ENCODE measurements at regions of chr13 and their contacts with region 1.

Region 1: GRCh38 chr13:57629821-57630235 is 1.7 kb upstream of the PCDH17 start:
- DNase-seq: no peak
- ATAC-seq: no peak
- H3K4me3 ChIP-seq: no peak overlapping the region
- H3K27ac ChIP-seq: no peak overlapping the region
- H3K4me1 ChIP-seq: no peaks in the 10 kb centered on the region
- H3K27me3 ChIP-seq: peaks cover 0 to 13% of the 10 kb centered on the region in 2 experiments; a peak in 3 of 5 replicates
- CTCF ChIP-seq: no peak
- EP300 ChIP-seq: no peak
- POLR2A ChIP-seq: no peak
- RAD21 ChIP-seq: no peak

Region 2: DNA sequence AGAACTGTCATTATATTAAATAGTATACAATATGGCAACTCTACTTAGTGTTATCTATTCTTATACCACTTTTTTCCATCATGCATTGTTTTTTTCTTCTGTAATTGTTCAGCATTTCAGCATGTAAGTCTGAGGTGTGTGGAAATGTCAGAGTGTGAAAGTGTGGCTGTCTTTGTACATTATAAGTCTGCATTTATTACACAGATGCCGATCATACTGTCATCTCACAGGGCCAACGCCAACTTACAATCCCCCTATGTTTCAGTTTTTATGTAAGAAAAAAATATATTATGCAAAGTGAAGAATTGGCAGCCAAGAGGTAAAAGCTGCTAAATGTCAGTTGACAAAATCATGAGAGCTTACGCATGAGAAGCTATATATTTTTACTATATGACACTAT is 41.2 kb before region 1 on chr13:
- CTCF ChIA-PET with region 1: no interaction called
- POLR2A ChIA-PET with region 1: no interaction called
- in situ Hi-C with region 1: no loop called
- intact Hi-C with region 1: no loop called
- DNase-seq: no peak
- ATAC-seq: no peak
- H3K4me3 ChIP-seq: 0 out of 6 replicates have a peak overlapping the region, but pooled peaks of 1 of the 3 experiments have one; percentile 4
- H3K27ac ChIP-seq: no peak overlapping the region
- H3K4me1 ChIP-seq: no peaks in the 10 kb centered on the region
- H3K27me3 ChIP-seq: no peaks in the 10 kb centered on the region
- CTCF ChIP-seq: no peak
- EP300 ChIP-seq: no peak
- POLR2A ChIP-seq: no peak
- RAD21 ChIP-seq: no peak

Region 3: DNA sequence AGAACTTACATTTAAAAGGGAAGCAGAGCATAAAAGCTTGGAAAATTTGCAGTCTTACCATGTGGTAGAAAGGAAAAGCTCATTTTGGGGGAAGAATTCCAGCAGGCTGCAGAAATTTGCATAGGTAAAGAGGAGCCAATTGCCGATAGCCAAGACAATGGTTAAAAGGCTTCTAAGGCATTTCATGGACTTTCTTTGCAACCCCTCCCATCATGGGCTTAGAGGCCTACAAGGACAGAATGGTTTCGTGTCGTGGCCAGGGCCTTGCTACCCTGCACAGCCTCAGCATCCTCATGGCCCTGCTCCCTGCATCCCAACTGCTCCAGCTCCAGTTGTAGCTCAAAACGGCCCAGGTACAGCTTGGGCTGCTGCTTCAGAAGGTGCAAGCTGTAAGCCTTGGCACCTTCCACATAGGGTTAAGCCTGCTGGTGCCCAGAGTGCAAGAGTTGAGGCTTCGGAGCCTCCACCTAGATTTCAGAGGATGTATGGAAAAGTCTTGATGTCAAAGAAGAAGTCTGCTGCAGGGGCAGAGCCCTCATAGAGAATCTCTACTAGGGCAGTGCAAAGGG is 422.1 kb after region 1 on chr13:
- CTCF ChIA-PET with region 1: no interaction called
- POLR2A ChIA-PET with region 1: no interaction called
- in situ Hi-C with region 1: no loop called
- intact Hi-C with region 1: no loop called
- DNase-seq: no peak
- ATAC-seq: no peak
- H3K4me3 ChIP-seq: no peak overlapping the region
- H3K27ac ChIP-seq: no peak overlapping the region
- H3K4me1 ChIP-seq: no peaks in the 10 kb centered on the region
- H3K27me3 ChIP-seq: no peaks in the 10 kb centered on the region
- CTCF ChIP-seq: no peak
- EP300 ChIP-seq: no peak
- POLR2A ChIP-seq: no peak
- RAD21 ChIP-seq: no peak

Region 4: DNA sequence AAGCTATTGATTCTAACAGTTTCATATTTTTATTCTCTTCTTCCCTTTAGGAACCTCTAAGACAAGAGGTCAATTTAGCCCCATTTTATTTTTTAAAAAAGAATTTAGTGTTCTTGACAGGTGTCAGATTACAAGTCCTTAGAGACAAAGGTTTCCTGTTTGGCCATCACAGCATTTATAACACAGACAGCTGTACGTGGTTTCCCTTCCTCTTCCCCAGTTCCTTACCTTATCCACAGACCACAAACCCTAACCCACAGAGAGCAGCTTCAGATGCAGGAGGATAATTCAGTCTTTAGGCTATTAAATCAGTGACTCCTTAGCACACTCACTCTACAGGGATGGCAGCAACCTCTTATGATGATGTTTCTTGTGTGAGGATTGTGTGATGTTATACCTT is 1323.8 kb after region 1 on chr13:
- CTCF ChIA-PET with region 1: no interaction called
- POLR2A ChIA-PET with region 1: no interaction called
- in situ Hi-C with region 1: loop called (anchors 10 kb)
- intact Hi-C with region 1: no loop called
- DNase-seq: no peak
- ATAC-seq: no peak
- H3K4me3 ChIP-seq: no peak overlapping the region
- H3K27ac ChIP-seq: no peak overlapping the region
- H3K4me1 ChIP-seq: no peaks in the 10 kb centered on the region
- H3K27me3 ChIP-seq: no peaks in the 10 kb centered on the region
- CTCF ChIP-seq: no peak
- EP300 ChIP-seq: no peak
- POLR2A ChIP-seq: no peak
- RAD21 ChIP-seq: no peak

Region 5: DNA sequence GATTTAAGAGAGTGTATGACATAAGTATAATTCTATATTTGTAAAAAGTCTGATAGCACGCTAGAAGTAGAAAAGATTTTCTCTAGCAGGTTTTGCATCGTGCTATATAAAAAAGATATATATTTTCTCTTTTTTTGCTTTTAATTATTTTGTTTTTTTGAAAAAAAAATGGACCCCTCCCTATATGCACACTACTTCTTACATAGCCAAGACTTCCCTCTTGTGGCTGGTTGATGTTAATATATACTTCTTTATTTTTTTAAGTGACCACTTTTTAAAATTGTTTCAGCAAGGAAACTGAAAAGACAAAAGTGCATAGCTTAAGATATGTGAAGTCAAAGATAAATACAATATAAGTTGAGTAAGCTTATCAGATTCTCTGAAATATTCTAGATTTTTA is 1331.1 kb after region 1 on chr13:
- CTCF ChIA-PET with region 1: no interaction called
- POLR2A ChIA-PET with region 1: no interaction called
- in situ Hi-C with region 1: loop called (anchors 10 kb)
- intact Hi-C with region 1: loop called (anchors 1 kb)
- DNase-seq: peak; percentile 9
- ATAC-seq: no peak
- H3K4me3 ChIP-seq: no peak overlapping the region
- H3K27ac ChIP-seq: no peak overlapping the region
- H3K4me1 ChIP-seq: no peaks in the 10 kb centered on the region
- H3K27me3 ChIP-seq: no peaks in the 10 kb centered on the region; a peak in 1 of 5 replicates
- CTCF ChIP-seq: no peak
- EP300 ChIP-seq: no peak
- POLR2A ChIP-seq: no peak
- RAD21 ChIP-seq: no peak